T-cell (primary cell): ENCODE measurements at regions of chr15 and their contacts with region 1.

Region 1: DNA sequence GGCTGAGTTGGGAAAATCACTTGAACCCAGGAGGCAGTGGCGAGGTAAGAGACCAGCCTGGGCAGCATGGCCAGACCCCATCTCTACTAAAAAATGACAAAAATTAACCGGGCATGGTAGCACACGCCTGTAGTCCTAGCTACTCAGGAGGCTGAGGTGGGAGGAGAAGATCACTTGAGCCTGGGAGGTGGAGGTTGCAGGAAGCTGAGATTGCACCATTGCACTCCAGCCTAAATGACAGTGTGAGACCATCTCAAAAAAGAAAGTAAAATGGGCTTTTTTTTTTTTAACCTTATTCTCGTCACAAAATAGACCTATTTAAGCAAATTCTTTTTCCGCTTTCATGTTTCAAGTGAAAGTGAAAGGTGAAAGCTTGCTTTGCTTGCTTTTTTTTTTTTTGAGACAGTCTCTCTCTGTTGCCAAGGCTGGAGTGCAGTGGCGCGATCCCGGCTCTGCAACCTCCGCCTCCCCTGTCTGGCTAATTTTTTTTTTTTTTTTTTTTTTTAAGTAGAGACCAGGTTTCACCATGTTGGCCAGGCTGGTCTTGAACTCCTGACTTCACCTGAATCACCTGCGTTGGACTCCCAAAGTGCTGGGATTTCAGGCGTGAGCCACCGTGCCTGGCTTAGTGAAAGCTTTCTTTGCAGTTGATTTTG is 3.6 kb downstream of the PDIA3 start:
- DNase-seq: peak in 29 of 35 experiments; percentile 4 to 84 (median 31)
- ATAC-seq: peak; percentile 11 to 61 (median 26)
- H3K4me3 ChIP-seq: peak overlapping the region; percentile 44 to 62
- H3K4me3 Mint-ChIP-seq: peak overlapping the region; percentile 74 to 96 (median 91)
- H3K27ac ChIP-seq: peak overlapping the region; percentile 80
- H3K27ac Mint-ChIP-seq: peak overlapping the region; percentile 85 to 91
- H3K4me1 ChIP-seq: peaks cover 21 to 55% of the 10 kb centered on the region in 2 experiments
- H3K4me1 Mint-ChIP-seq: peaks cover 63 to 74% (median 66%) of the 10 kb centered on the region in 3 donors
- H3K27me3 ChIP-seq: no peaks in the 10 kb centered on the region
- H3K27me3 Mint-ChIP-seq: no peaks in the 10 kb centered on the region

Region 2: DNA sequence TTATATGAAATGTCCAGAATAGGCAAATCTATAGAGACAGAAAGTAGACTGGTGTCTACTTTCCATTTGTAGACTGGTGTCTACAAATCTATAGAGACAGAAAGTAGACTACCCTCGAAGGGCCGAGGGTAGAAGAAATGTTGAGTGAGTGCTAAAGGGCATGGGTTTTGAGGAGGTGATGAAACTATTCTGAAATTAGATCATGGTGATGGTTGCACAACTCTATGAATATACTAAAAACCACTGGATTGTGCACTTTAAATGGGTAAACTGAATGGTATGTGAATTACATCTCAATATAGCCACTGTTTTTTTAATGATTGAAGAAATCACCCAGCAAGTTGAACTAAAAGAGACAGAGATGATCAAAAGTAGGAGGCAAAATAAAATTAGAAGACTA is 284.7 kb before region 1 on chr15:
- CTCF ChIA-PET with region 1: no interaction called
- POLR2A ChIA-PET with region 1: interaction called in 1 of 2 experiments, 16 read pairs
- DNase-seq: no peak
- ATAC-seq: no peak
- H3K4me3 ChIP-seq: no peak overlapping the region
- H3K4me3 Mint-ChIP-seq: no peak overlapping the region
- H3K27ac ChIP-seq: no peak overlapping the region
- H3K27ac Mint-ChIP-seq: peak overlapping the region in 1 of 2 donors; percentile 19
- H3K4me1 ChIP-seq: no peaks in the 10 kb centered on the region
- H3K4me1 Mint-ChIP-seq: no peaks in the 10 kb centered on the region
- H3K27me3 ChIP-seq: no peaks in the 10 kb centered on the region
- H3K27me3 Mint-ChIP-seq: no peaks in the 10 kb centered on the region

Region 3: GRCh38 chr15:43776718-43777583 is 27.1 kb after region 1 on chr15 and contains the start of gene ELL3:
- CTCF ChIA-PET with region 1: interaction called in 1 of 2 experiments, 11 read pairs
- POLR2A ChIA-PET with region 1: interaction called in 1 of 2 experiments, 3 read pairs
- DNase-seq: peak; percentile 67 to 91 (median 79)
- ATAC-seq: peak; percentile 84 to 89 (median 86)
- H3K4me3 ChIP-seq: peak within 1 kb of the TSS; percentile 87 to 96
- H3K4me3 Mint-ChIP-seq: peak within 1 kb of the TSS; percentile 92 to 93 (median 93)
- H3K27ac ChIP-seq: peak within 1 kb of the TSS; percentile 73
- H3K27ac Mint-ChIP-seq: peak within 1 kb of the TSS; percentile 91 to 95
- H3K4me1 ChIP-seq: peaks cover 3 to 22% of the 10 kb centered on the region in 2 experiments
- H3K4me1 Mint-ChIP-seq: peaks cover 18 to 23% (median 18%) of the 10 kb centered on the region in 3 donors
- H3K27me3 ChIP-seq: no peaks in the 10 kb centered on the region
- H3K27me3 Mint-ChIP-seq: no peaks in the 10 kb centered on the region
- total RNA-seq, gene ELL3: 0.80 to 6.5 (median 2.2) TPM

Region 4: GRCh38 chr15:43791993-43792760 is 42.4 kb after region 1 on chr15 and contains the start of gene SERF2:
- CTCF ChIA-PET with region 1: interaction called in 1 of 2 experiments, 10 read pairs
- POLR2A ChIA-PET with region 1: interaction called in 1 of 2 experiments, 3 read pairs
- DNase-seq: peak; percentile 97 to 100 (median 99)
- ATAC-seq: peak; percentile 94 to 97 (median 96)
- H3K4me3 ChIP-seq: peak within 1 kb of the TSS; percentile 93 to 99
- H3K4me3 Mint-ChIP-seq: peak within 1 kb of the TSS; percentile 89 to 95 (median 93)
- H3K27ac ChIP-seq: peak within 1 kb of the TSS; percentile 94
- H3K27ac Mint-ChIP-seq: peak within 1 kb of the TSS; percentile 95 to 97
- H3K4me1 ChIP-seq: peaks cover 19 to 35% of the 10 kb centered on the region in 2 experiments
- H3K4me1 Mint-ChIP-seq: peaks cover 41 to 49% (median 48%) of the 10 kb centered on the region in 3 donors
- H3K27me3 ChIP-seq: no peaks in the 10 kb centered on the region
- H3K27me3 Mint-ChIP-seq: no peaks in the 10 kb centered on the region
- total RNA-seq, gene SERF2: 397 to 586 (median 532) TPM

Region 5: GRCh38 chr15:44426975-44427755 is 677.3 kb after region 1 on chr15 and contains the start of gene CTDSPL2:
- CTCF ChIA-PET with region 1: no interaction called
- POLR2A ChIA-PET with region 1: interaction called in 1 of 2 experiments, 12 read pairs
- DNase-seq: peak; percentile 85 to 96 (median 91)
- ATAC-seq: peak; percentile 94 to 98 (median 97)
- H3K4me3 ChIP-seq: peak within 1 kb of the TSS; percentile 66 to 82
- H3K4me3 Mint-ChIP-seq: peak within 1 kb of the TSS; percentile 98 to 100 (median 100)
- H3K27ac ChIP-seq: peak within 1 kb of the TSS; percentile 91
- H3K27ac Mint-ChIP-seq: peak within 1 kb of the TSS; percentile 99
- H3K4me1 ChIP-seq: peaks cover 13 to 23% of the 10 kb centered on the region in 2 experiments
- H3K4me1 Mint-ChIP-seq: peaks cover 40 to 62% (median 51%) of the 10 kb centered on the region in 3 donors
- H3K27me3 ChIP-seq: no peaks in the 10 kb centered on the region
- H3K27me3 Mint-ChIP-seq: peaks cover 0 to 2% of the 10 kb centered on the region in 2 donors
- total RNA-seq, gene CTDSPL2: 59.7 to 76.7 (median 71.0) TPM